Lower leg skin (tissue), 4 donors: ENCODE measurements at regions of chr10 and their contacts with region 1.

Region 1: GRCh38 chr10:24209946-24210491 is 1.1 kb downstream of the KIAA1217 start:
- DNase-seq: peak; percentile 19 to 76
- H3K4me3 ChIP-seq: no peak overlapping the region
- CTCF ChIP-seq: no peak
- POLR2A ChIP-seq: no peak

Region 2: DNA sequence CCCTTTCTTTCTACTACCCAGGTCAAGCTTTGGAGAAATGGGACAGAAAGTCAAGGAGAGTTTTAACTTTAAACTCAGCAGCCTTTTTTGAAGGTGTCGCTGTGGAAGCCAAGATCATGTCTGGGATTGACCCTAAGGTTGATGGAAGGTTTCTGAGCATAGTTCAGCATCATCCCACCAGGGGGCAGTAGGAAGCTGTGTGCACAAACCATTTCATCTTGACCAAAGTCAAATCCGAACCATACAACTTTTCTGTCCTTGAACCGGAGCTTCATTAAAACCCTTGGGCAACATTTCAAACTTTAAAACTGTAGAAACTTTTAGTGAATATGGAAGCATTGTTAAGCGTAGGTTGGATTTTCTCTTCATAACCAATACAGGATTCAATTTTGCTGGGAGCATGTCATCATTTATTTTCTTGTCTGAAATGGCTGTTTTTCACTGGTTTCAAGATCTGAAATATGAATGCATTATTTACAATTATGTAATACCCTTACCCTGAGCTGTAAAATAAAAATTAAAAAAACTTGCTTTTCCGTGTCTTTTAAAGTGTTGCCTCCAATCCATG is 215.5 kb before region 1 on chr10:
- intact Hi-C with region 1: loop called (anchors 10 kb)
- DNase-seq: peak; percentile 55 to 89
- H3K4me3 ChIP-seq: no peak overlapping the region
- CTCF ChIP-seq: no peak
- POLR2A ChIP-seq: no peak

Region 3: GRCh38 chr10:24184455-24184854 is 25.6 kb before region 1 on chr10:
- intact Hi-C with region 1: no loop called
- DNase-seq: no peak
- H3K4me3 ChIP-seq: no peak overlapping the region
- CTCF ChIP-seq: no peak
- POLR2A ChIP-seq: no peak

Region 4: GRCh38 chr10:24349379-24350001 is 139.5 kb after region 1 on chr10:
- intact Hi-C with region 1: loop called (anchors 10 kb)
- DNase-seq: no peak
- H3K4me3 ChIP-seq: no peak overlapping the region
- CTCF ChIP-seq: no peak
- POLR2A ChIP-seq: no peak

Region 5: GRCh38 chr10:24642622-24643417 is 432.8 kb after region 1 on chr10:
- intact Hi-C with region 1: no loop called
- DNase-seq: no peak
- H3K4me3 ChIP-seq: no peak overlapping the region
- CTCF ChIP-seq: peak in 1 of 3 donors; percentile 47
- POLR2A ChIP-seq: no peak